K562 (cell line): ENCODE measurements at regions of chr1 and their contacts with region 1.

Region 1: DNA sequence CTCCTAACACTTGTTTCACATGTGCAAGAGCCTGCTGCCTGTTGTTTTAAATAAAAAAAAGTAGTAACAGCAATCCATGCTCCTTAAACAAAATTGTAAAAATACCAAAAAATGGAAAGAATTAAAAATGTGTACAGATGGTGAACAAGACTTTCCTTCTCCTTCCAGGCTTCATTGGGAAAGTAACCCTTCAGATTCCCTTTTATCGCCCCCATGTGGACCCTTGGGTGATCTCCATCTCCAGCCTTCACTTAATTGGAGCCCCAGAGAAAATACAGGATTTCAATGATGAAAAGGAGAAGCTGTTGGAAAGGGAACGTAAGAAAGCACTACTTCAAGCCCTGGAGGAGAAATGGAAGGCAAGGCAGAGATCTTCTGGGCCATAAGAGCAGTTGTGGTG is 14.2 kb downstream of the VPS13D start:
- DNase-seq: peak; percentile 47 to 63 (median 52)
- ATAC-seq: peak; percentile 75
- H3K4me3 ChIP-seq: no peak overlapping the region
- H3K27ac ChIP-seq: no peak overlapping the region
- H3K4me1 ChIP-seq: no peaks in the 10 kb centered on the region
- H3K27me3 ChIP-seq: no peaks in the 10 kb centered on the region
- CTCF ChIP-seq: peak; percentile 56 to 68 (median 60)
- EP300 ChIP-seq: no peak
- POLR2A ChIP-seq: no peak
- RAD21 ChIP-seq: peak in 1 of 2 experiments; percentile 51; a peak in 2 of 4 replicates

Region 2: GRCh38 chr1:12215118-12215961 is 28.7 kb before region 1 on chr1:
- CTCF ChIA-PET with region 1: no interaction called
- POLR2A ChIA-PET with region 1: interaction called, 10 read pairs
- in situ Hi-C with region 1: no loop called
- intact Hi-C with region 1: no loop called
- DNase-seq: peak in 1 of 4 experiments; percentile 38
- ATAC-seq: no peak
- H3K4me3 ChIP-seq: no peak overlapping the region
- H3K27ac ChIP-seq: no peak overlapping the region
- H3K4me1 ChIP-seq: peaks cover 20 to 23% of the 10 kb centered on the region in 2 experiments; a peak in 4 of 5 replicates
- H3K27me3 ChIP-seq: no peaks in the 10 kb centered on the region
- CTCF ChIP-seq: no peak
- EP300 ChIP-seq: no peak
- POLR2A ChIP-seq: no peak
- RAD21 ChIP-seq: no peak

Region 3: DNA sequence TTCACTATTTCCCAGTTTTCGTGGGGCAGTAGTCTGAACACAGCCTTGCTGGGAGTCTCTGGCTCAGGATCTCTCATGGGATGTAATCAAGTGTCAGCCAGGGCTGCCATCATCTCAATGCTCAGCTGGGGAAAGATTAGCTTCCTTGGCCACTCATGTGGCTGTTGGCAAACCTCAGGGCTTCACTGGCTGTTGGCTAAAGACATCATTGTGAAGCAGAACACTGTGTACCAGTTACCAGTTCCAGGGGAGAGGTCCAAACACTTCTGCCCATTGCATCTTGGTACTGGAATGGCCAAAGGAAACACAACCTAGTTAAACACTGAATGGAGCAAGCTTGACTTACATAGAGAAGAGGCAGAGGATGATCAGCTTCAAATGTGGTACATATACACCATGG is 433.5 kb after region 1 on chr1:
- CTCF ChIA-PET with region 1: no interaction called
- POLR2A ChIA-PET with region 1: no interaction called
- in situ Hi-C with region 1: no loop called
- intact Hi-C with region 1: no loop called
- DNase-seq: no peak
- ATAC-seq: no peak
- H3K4me3 ChIP-seq: no peak overlapping the region
- H3K27ac ChIP-seq: no peak overlapping the region; the same call in 2 of the 3 replicates
- H3K4me1 ChIP-seq: no peaks in the 10 kb centered on the region
- H3K27me3 ChIP-seq: peaks cover 21 to 25% of the 10 kb centered on the region in 2 experiments; a peak in 4 of 5 replicates
- CTCF ChIP-seq: no peak
- EP300 ChIP-seq: no peak
- POLR2A ChIP-seq: no peak
- RAD21 ChIP-seq: no peak